IMR-90 (cell line): ENCODE measurements at regions of chr12 and their contacts with region 1.

Region 1: DNA sequence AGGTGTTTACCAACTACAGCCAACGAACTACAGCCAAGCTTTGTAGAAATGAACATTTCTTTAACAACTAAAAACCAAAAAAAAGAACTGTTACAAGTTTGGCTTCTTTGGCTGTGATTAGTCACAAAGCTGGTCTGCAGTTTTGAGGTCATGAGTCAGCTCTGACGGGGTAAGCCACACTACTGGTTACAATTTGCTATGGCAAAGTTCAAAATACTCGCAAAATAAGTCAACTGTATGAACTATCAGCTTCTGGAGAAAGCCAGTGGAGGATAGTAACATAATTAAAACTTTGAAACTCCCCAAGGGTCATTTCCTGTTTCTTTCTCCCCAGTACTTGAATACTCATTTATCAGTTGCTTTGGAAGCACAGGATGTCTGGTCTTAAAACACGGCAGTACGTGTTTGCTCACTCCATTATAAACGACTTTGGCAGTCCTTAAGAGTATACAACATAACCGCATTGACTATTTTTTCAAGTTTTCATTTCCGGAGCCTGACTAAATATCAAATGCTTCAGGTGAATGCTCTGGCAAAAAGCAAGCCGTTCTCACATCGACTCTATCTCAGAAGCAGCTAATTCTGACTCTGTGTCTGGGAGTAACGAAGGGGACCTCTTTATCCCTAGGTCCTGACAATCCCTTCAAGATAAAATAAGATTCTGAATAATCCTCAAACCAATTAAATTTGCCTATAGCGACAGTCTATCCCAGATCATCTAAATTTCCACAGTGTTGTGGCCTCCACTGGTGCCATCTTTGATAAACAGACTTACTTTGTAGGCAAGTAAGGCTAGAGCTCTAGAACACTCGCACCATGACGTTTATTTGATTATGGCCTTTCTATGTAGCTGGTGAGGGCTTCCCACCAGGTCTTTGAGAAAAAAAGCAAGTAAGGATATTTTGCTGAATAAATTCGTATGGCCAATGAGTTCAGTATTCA is 10.6 kb downstream of the PHLDA1 start:
- DNase-seq: peak; percentile 99
- ATAC-seq: peak; percentile 70
- H3K4me3 ChIP-seq: peak overlapping the region; percentile 16; the same call in 1 of the 2 replicates
- H3K27ac ChIP-seq: peak overlapping the region; percentile 90
- H3K4me1 ChIP-seq: peaks cover 17% of the 10 kb centered on the region
- H3K27me3 ChIP-seq: no peaks in the 10 kb centered on the region
- CTCF ChIP-seq: no peak
- POLR2A ChIP-seq: peak; percentile 72; the same call in 1 of the 2 replicates
- RAD21 ChIP-seq: peak; percentile 19

Region 2: GRCh38 chr12:75526655-75527511 is 494.1 kb before region 1 on chr12:
- CTCF ChIA-PET with region 1: interaction called, 3 read pairs
- POLR2A ChIA-PET with region 1: no interaction called
- dilution Hi-C with region 1: no loop called
- in situ Hi-C with region 1: no loop called
- intact Hi-C with region 1: loop called (anchors 1 kb)
- DNase-seq: peak; percentile 84
- ATAC-seq: peak; percentile 78
- H3K4me3 ChIP-seq: no peak overlapping the region
- H3K27ac ChIP-seq: peak overlapping the region; percentile 98
- H3K4me1 ChIP-seq: peaks cover 11% of the 10 kb centered on the region
- H3K27me3 ChIP-seq: no peaks in the 10 kb centered on the region
- CTCF ChIP-seq: peak; percentile 82
- POLR2A ChIP-seq: no peak
- RAD21 ChIP-seq: peak; percentile 92

Region 3: GRCh38 chr12:75705749-75706711 is 315.0 kb before region 1 on chr12:
- CTCF ChIA-PET with region 1: no interaction called
- POLR2A ChIA-PET with region 1: interaction called, 4 read pairs
- dilution Hi-C with region 1: no loop called
- in situ Hi-C with region 1: no loop called
- intact Hi-C with region 1: loop called (anchors 2 kb)
- DNase-seq: peak; percentile 100
- ATAC-seq: peak; percentile 96
- H3K4me3 ChIP-seq: no peak overlapping the region
- H3K27ac ChIP-seq: peak overlapping the region; percentile 93
- H3K4me1 ChIP-seq: peaks cover 8% of the 10 kb centered on the region
- H3K27me3 ChIP-seq: no peaks in the 10 kb centered on the region
- CTCF ChIP-seq: no peak
- POLR2A ChIP-seq: no peak
- RAD21 ChIP-seq: peak; percentile 28; the same call in 1 of the 2 replicates

Region 4: DNA sequence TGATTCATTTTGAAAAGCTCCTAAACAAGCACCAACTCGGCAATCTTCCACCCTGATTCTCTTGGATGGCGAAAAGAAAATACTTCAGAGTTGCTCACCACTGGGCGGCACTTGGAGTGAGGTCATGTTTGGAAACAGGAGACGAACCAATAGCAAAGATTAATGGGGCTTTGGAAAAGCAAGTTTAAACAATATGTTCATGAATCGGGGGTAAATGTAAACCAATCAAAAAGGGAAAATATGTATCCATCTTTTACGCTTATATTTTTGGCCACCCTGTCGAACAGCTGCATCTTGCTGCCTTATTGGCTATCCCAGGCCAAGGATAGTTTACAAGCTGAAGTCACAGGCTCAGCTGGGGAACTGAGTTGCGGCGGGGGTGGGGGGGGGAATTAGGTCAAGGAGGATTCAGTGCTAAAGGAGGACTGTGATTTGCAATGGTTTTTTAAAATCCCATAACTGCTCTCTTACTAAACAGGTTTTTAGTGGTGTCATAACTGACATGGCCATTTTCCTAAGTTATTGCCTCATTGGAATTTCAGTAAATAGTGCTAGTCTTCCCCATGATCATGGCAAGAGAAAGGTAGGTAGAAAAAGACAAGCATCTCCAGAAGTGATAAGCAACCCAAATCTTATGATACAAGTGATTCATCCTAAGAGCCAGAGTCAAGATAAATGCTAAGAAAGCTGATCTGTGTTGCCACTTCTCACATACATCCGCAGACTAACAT is 200.0 kb before region 1 on chr12:
- CTCF ChIA-PET with region 1: no interaction called
- POLR2A ChIA-PET with region 1: interaction called, 3 read pairs
- dilution Hi-C with region 1: no loop called
- in situ Hi-C with region 1: loop called (anchors 5 kb)
- intact Hi-C with region 1: loop called (anchors 1 kb)
- DNase-seq: peak; percentile 97
- ATAC-seq: peak; percentile 71
- H3K4me3 ChIP-seq: no peak overlapping the region; the same call in 1 of the 2 replicates
- H3K27ac ChIP-seq: peak overlapping the region; percentile 40
- H3K4me1 ChIP-seq: peaks cover 33% of the 10 kb centered on the region
- H3K27me3 ChIP-seq: no peaks in the 10 kb centered on the region
- CTCF ChIP-seq: peak; percentile 18; the same call in 1 of the 2 replicates
- POLR2A ChIP-seq: no peak
- RAD21 ChIP-seq: 0 out of 2 replicates have a peak, but pooled peaks have one; percentile 20

Region 5: DNA sequence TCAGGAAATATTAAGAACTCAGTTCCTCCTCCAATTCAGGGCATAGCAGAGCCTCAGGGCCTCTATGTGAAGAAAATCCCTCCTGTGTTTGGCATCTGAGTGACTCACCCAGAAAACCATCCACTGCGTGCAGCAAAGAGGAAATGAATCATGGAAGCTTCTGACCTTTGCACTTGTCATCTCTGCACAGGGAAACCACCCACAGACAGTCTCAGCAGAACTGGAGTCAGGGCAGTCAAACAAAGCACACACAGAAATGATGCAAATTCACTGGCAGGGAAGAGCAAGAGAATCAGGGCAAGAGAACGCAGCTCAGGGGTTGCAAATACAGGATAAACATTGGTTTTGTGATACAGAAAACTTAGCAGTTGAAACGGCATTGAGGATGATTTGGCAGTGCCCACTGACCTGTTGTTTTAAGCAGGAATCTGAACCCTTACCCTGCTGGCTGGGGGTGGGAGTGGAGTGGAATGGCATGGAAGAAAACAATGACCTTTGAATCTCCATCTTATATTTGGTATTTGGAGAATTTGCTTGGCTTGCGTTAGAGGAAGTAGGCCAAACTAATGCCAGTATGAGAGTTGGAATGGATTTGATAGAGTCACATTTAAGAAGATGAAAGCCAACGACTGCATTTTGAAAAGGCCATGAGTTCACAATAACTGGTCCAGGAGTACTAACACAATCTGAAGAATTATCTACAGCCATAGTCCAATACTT is 42.9 kb before region 1 on chr12:
- CTCF ChIA-PET with region 1: interaction called, 3 read pairs
- POLR2A ChIA-PET with region 1: interaction called, 3 read pairs
- dilution Hi-C with region 1: no loop called
- in situ Hi-C with region 1: no loop called
- intact Hi-C with region 1: loop called (anchors 1 kb)
- DNase-seq: peak; percentile 100
- ATAC-seq: peak; percentile 91
- H3K4me3 ChIP-seq: no peak overlapping the region
- H3K27ac ChIP-seq: peak overlapping the region; percentile 99
- H3K4me1 ChIP-seq: peaks cover 20% of the 10 kb centered on the region
- H3K27me3 ChIP-seq: no peaks in the 10 kb centered on the region
- CTCF ChIP-seq: no peak; the same call in 1 of the 2 replicates
- POLR2A ChIP-seq: 0 out of 2 replicates have a peak, but pooled peaks have one; percentile 2
- RAD21 ChIP-seq: peak; percentile 44; the same call in 1 of the 2 replicates